Right lobe of liver (tissue), 6 donors: ENCODE measurements at regions of chr18 and their contacts with region 1.

Region 1: DNA sequence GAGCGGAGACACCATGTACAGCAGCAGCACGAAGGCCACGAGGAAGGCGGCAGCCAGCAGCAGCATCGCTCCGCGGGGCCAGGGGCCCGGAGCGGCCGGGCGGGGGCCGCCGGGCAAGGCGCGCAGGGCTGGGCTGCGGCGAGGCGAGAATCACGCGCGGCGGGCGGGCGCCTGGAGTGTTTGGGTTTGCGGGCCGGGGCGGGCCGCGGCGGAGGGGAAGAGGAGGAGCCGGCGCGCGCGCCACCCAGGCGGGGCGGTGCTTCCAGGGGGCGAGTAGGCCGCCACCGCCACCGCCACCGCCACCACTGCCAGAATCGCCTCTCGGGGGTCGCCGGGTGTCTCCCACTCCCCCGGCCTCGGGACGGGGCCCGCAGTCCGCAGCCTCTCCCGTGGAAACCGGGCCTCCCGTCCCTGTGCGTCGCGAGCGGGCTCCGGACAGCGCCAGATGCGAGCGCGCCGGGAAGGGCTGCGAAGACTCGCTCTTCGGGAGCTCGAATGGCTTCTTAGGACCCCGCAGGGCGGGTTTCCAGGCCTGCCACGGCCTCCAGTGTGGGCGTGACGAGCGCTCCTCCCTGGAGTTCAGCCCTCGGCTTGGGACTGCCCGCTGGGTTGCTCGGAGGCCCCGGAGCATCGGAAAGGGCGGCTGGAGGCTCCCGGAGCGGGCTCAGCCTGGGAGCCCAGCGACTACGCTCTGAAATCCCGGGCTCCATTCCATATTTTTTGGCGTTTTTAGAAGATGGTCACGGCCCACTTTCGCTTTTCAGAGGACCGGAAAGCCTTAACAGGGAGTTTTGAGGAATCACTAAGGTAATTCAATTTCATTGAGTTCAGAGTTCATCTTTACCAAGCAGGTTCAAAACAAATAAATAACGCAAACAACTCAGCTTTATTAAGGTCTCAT is at the start of gene KDSR:
- DNase-seq: peak; percentile 95 to 98 (median 97)
- ATAC-seq: peak; percentile 92 to 97 (median 93)
- H3K4me3 ChIP-seq: peak within 1 kb of the TSS; percentile 85 to 90 (median 90)
- H3K27ac ChIP-seq: peak within 1 kb of the TSS; percentile 89 to 97 (median 94)
- H3K4me1 ChIP-seq: peaks cover 0 to 18% (median 0%) of the 10 kb centered on the region in 4 donors
- H3K27me3 ChIP-seq: no peaks in the 10 kb centered on the region
- CTCF ChIP-seq: peak in 1 of 4 donors; percentile 3
- POLR2A ChIP-seq: peak; percentile 95
- total RNA-seq, gene KDSR: 32.3 to 67.1 (median 56.1) TPM

Region 2: GRCh38 chr18:63079114-63079513 is 288.2 kb before region 1 on chr18:
- intact Hi-C with region 1: no loop called
- DNase-seq: no peak
- ATAC-seq: no peak
- H3K4me3 ChIP-seq: no peak overlapping the region
- H3K27ac ChIP-seq: no peak overlapping the region
- H3K4me1 ChIP-seq: no peaks in the 10 kb centered on the region
- H3K27me3 ChIP-seq: no peaks in the 10 kb centered on the region
- CTCF ChIP-seq: no peak
- POLR2A ChIP-seq: no peak

Region 3: DNA sequence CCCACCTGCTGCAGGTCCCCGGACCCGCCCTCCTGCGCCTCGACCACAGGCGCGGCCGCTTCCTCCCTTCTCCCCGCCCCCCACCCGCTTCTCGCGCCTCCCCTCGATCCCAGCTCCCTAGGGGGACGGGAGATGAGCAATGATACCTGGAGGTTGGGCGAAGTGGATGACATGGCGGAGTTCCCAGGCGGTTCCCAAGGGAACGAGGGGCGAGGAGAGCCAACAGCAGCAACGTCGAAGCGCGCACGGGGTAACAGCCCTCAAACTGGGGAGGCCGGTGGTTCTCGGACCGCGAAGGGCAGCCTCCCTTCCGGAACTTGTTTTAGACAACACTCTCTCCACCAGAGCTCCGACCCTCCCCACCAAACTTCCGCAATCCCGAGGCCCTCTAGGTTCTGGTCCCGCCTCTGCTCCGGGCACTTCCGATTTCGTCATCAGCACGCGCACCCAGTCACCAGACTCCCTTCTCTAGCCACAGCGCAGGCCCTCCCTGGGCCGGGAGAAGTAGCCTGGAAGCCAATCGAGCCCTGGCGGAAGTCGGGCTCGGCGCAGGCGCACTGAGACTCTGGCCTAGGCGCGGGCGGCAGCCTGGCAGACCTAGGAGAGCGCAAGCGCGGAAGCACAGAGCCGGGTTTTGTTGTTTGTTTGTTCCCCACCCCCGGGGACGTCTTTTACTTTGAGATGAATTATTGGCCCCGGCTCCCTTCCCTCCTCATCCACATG is 54.9 kb after region 1 on chr18 and contains the start of gene VPS4B:
- intact Hi-C with region 1: loop called in 1 of 2 experiments (anchors 10 kb)
- DNase-seq: peak; percentile 99 to 100 (median 100)
- ATAC-seq: peak; percentile 98 to 99 (median 98)
- H3K4me3 ChIP-seq: peak within 1 kb of the TSS; percentile 86 to 94 (median 94)
- H3K27ac ChIP-seq: peak within 1 kb of the TSS; percentile 82 to 90 (median 88)
- H3K4me1 ChIP-seq: peaks cover 0 to 7% (median 3%) of the 10 kb centered on the region in 4 donors
- H3K27me3 ChIP-seq: no peaks in the 10 kb centered on the region
- CTCF ChIP-seq: peak in 1 of 4 donors; percentile 21
- POLR2A ChIP-seq: peak; percentile 86
- total RNA-seq, gene VPS4B: 18.3 to 30.4 (median 22.3) TPM

Region 4: DNA sequence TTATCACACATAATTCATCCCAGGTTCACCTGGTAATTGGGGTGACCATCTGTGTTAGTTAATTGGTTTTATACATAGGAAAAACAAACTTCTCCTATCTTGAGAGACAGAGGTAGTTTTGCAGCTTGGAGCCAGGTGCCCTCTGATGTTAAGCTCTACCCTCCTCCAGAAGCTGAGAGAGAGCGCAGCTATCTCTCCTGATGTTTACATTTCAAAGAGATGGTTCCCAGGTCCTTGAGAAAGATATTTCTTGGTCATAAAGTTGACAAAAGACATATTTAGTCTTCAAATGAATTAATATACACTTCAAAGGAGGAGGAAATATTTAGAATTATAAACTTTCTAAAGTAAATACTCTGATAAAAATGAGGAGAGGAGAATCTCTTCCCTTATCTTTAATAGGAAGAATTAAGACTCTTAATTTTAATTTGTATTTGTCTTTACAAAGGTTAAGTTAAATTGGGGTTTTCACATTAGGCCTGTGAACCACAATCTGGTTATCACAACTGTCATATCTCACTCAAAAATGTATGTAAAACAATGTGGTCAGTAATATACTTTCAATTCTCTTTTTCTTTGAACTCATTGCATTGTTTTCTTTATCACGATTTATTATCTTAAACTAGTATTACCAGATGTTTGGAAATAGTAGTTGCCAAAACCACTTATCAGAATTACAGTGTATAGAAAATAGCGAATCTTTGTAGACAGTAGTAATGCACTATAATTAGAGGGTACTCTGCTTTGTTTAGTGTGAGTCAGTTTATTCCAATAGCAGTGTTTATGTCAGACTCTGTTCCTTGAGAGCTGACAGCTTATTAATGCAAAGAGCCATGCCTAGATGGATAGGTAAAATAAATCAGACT is 250.0 kb after region 1 on chr18:
- intact Hi-C with region 1: no loop called
- DNase-seq: no peak
- ATAC-seq: no peak
- H3K4me3 ChIP-seq: no peak overlapping the region
- H3K27ac ChIP-seq: no peak overlapping the region
- H3K4me1 ChIP-seq: no peaks in the 10 kb centered on the region
- H3K27me3 ChIP-seq: no peaks in the 10 kb centered on the region
- CTCF ChIP-seq: no peak
- POLR2A ChIP-seq: no peak